Cardiac septum (tissue), 1 donor: ENCODE measurements at regions of chr6 and their contacts with region 1.

Region 1: DNA sequence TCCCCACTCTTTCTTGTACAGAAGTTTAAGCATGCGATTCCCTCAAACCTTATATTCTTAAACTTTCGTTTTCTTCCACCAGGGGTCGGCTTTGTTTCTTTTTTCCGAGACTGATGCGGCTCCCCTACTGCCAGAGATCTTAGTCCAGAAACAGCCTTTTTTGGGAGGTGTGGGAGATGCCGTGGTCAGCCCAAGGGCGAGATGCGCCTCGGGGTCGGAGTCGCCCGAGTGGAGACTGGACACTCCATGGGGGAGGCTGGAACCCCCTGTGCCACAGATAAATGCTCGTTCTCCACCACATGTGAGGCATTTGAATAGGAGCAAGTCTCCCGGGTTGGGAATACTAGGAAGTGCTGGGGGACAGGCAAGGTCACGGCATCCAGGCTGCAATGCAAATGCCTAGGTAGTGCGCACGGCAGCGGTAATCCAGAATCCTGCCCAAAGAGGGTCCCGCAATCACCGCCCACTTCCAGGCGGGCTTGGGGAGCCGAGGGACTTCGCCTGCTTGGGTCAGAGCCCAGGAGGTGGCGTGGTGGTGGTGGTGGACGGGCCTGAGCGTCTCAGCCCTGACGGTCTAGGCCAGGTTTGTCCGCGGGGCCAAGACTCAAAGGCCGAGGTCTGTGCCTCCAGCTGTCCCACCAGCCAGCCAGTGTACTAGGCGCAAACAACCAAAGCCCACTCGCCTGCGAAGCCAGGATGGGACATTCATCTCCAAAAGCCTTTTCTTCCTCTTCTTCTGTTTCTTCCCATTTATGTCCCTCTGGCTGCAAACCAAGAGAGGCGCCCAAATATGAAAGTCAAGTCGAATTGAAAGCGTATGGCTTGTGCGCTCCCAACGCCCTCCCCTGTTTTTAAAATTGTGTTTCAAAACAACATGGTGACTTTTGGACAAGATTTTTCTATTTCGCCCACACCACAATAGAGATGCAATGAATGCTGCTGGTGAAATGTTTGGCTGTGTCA is 39.3 kb upstream of the OSTM1 start:
- DNase-seq: no peak

Region 2: GRCh38 chr6:108168501-108169463 is 54.9 kb after region 1 on chr6:
- intact Hi-C with region 1: loop called (anchors 5 kb)
- DNase-seq: no peak

Region 3: GRCh38 chr6:108250240-108250866 is 136.5 kb after region 1 on chr6:
- intact Hi-C with region 1: loop called (anchors 10 kb)
- DNase-seq: no peak

Region 4: GRCh38 chr6:108492131-108492766 is 378.4 kb after region 1 on chr6:
- intact Hi-C with region 1: loop called (anchors 10 kb)
- DNase-seq: no peak

Region 5: GRCh38 chr6:108526739-108527174 is 412.9 kb after region 1 on chr6:
- intact Hi-C with region 1: loop called (anchors 5 kb)
- DNase-seq: no peak